ENCODE measurements at regions of chr11 and their contacts with region 1.

Region 1: DNA sequence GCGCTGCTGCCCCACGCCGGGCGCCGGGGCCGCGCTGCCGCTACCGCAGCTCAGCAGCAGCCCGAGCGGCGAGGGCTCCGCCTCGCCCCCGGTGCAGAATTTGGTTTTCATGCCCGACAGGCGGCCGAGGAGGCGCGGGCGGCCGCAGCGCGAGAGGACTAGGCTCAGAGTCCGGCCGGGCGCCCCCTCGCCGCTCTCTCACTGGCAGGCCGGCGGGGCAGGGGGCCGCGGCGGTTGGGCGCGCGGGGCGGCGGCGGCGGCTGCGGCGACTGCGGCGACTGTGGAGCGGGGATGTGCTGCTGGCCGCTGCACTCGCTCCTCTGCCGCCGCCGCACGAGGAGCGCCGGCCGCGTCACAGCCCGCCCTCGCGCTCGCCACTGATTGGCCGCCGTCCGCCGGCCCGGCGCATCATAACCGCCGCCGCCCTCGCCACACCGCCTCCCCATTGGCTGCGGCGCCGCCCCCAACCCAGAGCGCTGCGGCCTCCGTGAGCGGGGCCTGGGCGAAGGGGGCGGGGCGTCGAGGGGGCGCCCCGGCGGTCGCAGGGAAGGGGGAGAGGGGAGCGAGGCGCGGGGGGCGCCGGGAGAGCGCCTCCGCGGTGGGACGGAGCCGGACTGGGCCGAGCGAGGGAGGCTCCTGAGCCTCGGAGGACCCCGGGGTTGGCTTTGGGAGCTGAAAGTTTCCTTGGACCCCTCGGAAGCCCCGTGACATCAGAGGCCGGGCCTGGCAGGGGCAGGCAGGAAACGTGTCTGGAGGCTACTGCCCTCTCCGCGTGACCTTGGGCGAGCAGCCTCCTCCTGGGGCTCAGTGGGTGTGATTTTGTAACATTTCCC is at the start of gene CHKA:
- DNase-seq: peak; percentile 64
- ATAC-seq: peak; percentile 91
- H3K4me3 ChIP-seq: peak within 1 kb of the TSS; percentile 58 to 70
- H3K27ac ChIP-seq: peak within 1 kb of the TSS; percentile 74
- H3K4me1 ChIP-seq: peaks cover 46 to 81% of the 10 kb centered on the region in 2 experiments
- H3K27me3 ChIP-seq: no peaks in the 10 kb centered on the region
- CTCF ChIP-seq: no peak
- POLR2A ChIP-seq: peak; percentile 56
- RAD21 ChIP-seq: no peak
- total RNA-seq, gene CHKA: 33.1 TPM

Region 2: GRCh38 chr11:67732045-67732787 is 389.1 kb before region 1 on chr11:
- CTCF ChIA-PET with region 1: no interaction called
- POLR2A ChIA-PET with region 1: no interaction called
- RAD21 ChIA-PET with region 1: no interaction called
- intact Hi-C with region 1: no loop called
- DNase-seq: peak; percentile 4
- ATAC-seq: peak; percentile 91
- H3K4me3 ChIP-seq: peak overlapping the region; percentile 24 to 44
- H3K27ac ChIP-seq: no peak overlapping the region
- H3K4me1 ChIP-seq: no peaks in the 10 kb centered on the region; a peak in 1 of 4 replicates
- H3K27me3 ChIP-seq: no peaks in the 10 kb centered on the region
- CTCF ChIP-seq: peak; percentile 27 to 51 (median 37); a peak in 4 of 6 replicates
- POLR2A ChIP-seq: no peak
- RAD21 ChIP-seq: no peak

Region 3: GRCh38 chr11:68030318-68031138 is 90.8 kb before region 1 on chr11 and contains the start of gene NDUFS8:
- CTCF ChIA-PET with region 1: no interaction called
- POLR2A ChIA-PET with region 1: no interaction called
- RAD21 ChIA-PET with region 1: no interaction called
- intact Hi-C with region 1: loop called (anchors 10 kb)
- DNase-seq: peak; percentile 99
- ATAC-seq: peak; percentile 89
- H3K4me3 ChIP-seq: peak within 1 kb of the TSS; percentile 86 to 97
- H3K27ac ChIP-seq: peak within 1 kb of the TSS; percentile 81
- H3K4me1 ChIP-seq: peaks cover 37 to 59% of the 10 kb centered on the region in 2 experiments
- H3K27me3 ChIP-seq: no peaks in the 10 kb centered on the region
- CTCF ChIP-seq: no peak
- POLR2A ChIP-seq: peak; percentile 71
- RAD21 ChIP-seq: no peak
- total RNA-seq, gene NDUFS8: 189 TPM